Activated CD4-positive, alpha-beta T cell treated with anti-CD3 and anti-CD28 coated beads for 36 hours (primary cell): ENCODE measurements at regions of chr15 and their contacts with region 1.

Region 1: DNA sequence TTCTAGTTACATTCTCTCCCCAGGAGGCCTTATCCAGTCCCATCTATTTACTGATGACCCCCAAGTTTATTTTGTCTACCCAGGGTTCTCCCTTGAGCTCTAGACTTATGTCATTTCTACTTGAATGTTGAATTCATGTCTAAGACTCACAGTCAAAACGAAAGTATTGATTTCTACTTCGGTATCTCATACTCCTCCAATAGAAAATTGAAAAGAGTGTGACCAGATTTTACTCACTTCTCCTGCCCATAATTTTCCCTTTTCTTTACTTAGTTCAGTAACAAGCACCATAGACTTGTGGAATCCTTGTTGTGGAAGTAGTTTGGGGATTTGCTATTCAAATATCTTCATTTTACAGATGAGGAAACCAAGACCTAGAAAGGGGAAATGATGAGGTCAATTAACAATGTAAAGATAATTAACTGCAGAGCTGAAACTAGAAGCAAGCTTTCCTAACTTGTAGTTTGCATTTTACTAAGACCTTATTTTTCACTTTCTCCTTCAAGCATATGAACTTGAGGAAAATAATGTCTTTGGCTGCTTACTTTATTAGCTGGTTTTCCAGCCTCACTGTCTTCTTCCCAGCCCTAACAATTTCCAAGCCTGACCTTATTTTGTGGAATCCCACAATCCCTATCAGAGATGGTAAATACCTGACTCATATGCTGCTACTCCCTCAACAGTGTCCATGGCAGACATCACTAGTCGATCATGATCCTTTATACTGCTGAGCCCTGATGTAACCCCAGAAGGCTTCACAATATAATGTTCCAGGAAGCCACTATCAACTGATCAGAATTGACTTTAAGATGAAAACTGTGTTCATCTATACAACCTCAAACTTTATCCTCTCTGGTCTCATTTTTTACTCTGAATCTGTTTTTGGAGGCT is 123.9 kb upstream of the AGBL1 start:
- DNase-seq: no peak
- ATAC-seq: peak; percentile 51
- H3K4me3 Mint-ChIP-seq: no peak overlapping the region
- H3K27ac Mint-ChIP-seq: no peak overlapping the region
- H3K4me1 Mint-ChIP-seq: peaks cover 9% of the 10 kb centered on the region
- H3K27me3 Mint-ChIP-seq: peaks cover 7% of the 10 kb centered on the region

Region 2: DNA sequence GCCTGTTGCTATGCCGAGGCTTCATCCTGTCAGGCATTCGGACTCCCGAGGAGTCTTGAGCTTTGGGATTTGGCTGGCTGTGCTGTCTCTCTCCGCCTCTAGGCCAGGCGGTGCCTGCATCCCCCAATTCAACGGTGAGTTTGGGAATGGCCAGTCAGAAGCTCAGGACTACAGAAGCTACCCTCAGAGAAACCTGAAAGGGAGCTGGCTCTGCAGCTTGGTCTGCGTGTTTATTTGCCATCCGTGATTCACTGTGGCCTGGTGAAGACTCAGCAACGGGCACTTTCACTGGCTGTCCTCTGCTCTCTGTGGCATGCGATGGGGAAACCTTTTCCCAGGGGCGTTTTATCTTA is 57.8 kb before region 1 on chr15:
- CTCF ChIA-PET with region 1: no interaction called
- POLR2A ChIA-PET with region 1: no interaction called
- intact Hi-C with region 1: loop called in 1 of 2 experiments (anchors 10 kb)
- DNase-seq: no peak
- ATAC-seq: no peak
- H3K4me3 Mint-ChIP-seq: no peak overlapping the region
- H3K27ac Mint-ChIP-seq: no peak overlapping the region
- H3K4me1 Mint-ChIP-seq: no peaks in the 10 kb centered on the region
- H3K27me3 Mint-ChIP-seq: peaks cover 38% of the 10 kb centered on the region

Region 3: DNA sequence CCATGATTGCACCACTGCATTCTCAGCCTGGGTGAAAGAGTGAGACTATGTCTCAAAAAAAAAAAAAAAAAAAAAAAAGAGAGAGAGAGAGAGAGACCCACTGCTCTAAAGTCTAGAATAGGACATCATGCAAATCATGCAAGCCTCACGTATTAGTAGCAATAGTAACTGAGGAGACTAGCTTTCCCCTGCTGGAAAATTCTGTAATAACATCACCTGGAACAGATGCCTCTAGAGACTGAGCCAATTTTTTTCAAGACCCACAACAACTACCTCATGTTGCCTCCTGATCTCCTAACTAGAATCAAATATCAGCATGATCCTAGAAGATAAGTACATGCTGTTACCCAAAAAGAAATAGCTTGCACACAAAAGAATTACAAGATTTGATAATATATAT is 585.8 kb after region 1 on chr15:
- CTCF ChIA-PET with region 1: no interaction called
- POLR2A ChIA-PET with region 1: no interaction called
- intact Hi-C with region 1: no loop called
- DNase-seq: no peak
- ATAC-seq: no peak
- H3K4me3 Mint-ChIP-seq: no peak overlapping the region
- H3K27ac Mint-ChIP-seq: no peak overlapping the region
- H3K4me1 Mint-ChIP-seq: no peaks in the 10 kb centered on the region
- H3K27me3 Mint-ChIP-seq: peaks cover 11% of the 10 kb centered on the region